Activated T-helper 2 cell treated with anti-CD3 and anti-CD28 coated beads, Interferon-gamma antibody, Interleukin-2, Interleukin-4, amounts not matched to agents 10 μg/mL and 5 μg/mL and 100 μg/mL, durations not matched to agents 14 hours and 24 hours and 36 hours (primary cell): ENCODE measurements at regions of chr20 and their contacts with region 1.

Region 1: DNA sequence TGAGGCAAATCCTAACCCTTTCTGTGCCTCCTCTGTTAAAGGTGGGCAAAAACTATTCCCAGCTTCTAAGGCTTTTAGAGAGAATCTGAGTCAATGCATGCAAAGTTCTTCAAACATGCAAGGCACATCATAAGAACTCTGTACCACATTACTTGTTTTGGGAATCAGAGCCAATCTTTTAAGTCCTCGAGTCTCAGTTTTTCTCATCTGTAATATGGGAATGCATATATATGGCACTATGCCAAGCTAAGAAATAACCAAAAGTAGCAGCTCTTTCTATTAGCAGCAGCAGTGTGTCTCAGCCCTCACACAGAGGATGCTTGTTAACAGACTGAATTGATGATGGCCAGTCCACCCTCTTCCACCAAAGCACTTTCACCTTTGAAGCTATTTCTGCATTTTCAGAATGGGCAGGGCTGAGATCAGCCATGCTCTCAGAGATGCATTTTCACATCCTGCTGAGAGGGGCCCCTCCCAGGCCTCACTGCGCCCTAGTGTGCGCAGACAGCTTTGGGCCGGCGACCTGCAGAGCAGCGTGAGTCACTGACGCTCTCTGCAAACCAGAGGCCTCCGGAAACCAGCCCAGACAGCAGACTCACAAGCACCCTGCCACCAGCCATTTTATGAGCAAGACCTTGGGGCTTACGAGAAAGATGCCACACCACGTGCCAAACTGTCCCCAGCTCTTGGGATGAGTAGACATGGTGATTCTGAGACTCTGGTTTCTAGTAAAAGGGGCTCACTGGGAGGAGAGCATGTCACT is 138.0 kb downstream of the NFATC2 start:
- DNase-seq: peak; percentile 84
- H3K4me3 Mint-ChIP-seq: peak overlapping the region; percentile 28
- H3K27ac Mint-ChIP-seq: peak overlapping the region; percentile 95
- H3K4me1 Mint-ChIP-seq: peaks cover 88% of the 10 kb centered on the region
- H3K27me3 Mint-ChIP-seq: no peaks in the 10 kb centered on the region

Region 2: GRCh38 chr20:50824193-50824632 is 580.3 kb before region 1 on chr20:
- intact Hi-C with region 1: no loop called
- DNase-seq: no peak
- H3K4me3 Mint-ChIP-seq: no peak overlapping the region
- H3K27ac Mint-ChIP-seq: no peak overlapping the region
- H3K4me1 Mint-ChIP-seq: peaks cover 4% of the 10 kb centered on the region
- H3K27me3 Mint-ChIP-seq: no peaks in the 10 kb centered on the region

Region 3: GRCh38 chr20:51385646-51386530 is 18.6 kb before region 1 on chr20:
- intact Hi-C with region 1: loop called (anchors 1 kb)
- DNase-seq: no peak
- H3K4me3 Mint-ChIP-seq: no peak overlapping the region
- H3K27ac Mint-ChIP-seq: no peak overlapping the region
- H3K4me1 Mint-ChIP-seq: peaks cover 62% of the 10 kb centered on the region
- H3K27me3 Mint-ChIP-seq: no peaks in the 10 kb centered on the region

Region 4: GRCh38 chr20:51423290-51423667 is 18.8 kb after region 1 on chr20:
- intact Hi-C with region 1: loop called (anchors 2 kb)
- DNase-seq: no peak
- H3K4me3 Mint-ChIP-seq: no peak overlapping the region
- H3K27ac Mint-ChIP-seq: peak overlapping the region; percentile 85
- H3K4me1 Mint-ChIP-seq: peaks cover 50% of the 10 kb centered on the region
- H3K27me3 Mint-ChIP-seq: no peaks in the 10 kb centered on the region

Region 5: DNA sequence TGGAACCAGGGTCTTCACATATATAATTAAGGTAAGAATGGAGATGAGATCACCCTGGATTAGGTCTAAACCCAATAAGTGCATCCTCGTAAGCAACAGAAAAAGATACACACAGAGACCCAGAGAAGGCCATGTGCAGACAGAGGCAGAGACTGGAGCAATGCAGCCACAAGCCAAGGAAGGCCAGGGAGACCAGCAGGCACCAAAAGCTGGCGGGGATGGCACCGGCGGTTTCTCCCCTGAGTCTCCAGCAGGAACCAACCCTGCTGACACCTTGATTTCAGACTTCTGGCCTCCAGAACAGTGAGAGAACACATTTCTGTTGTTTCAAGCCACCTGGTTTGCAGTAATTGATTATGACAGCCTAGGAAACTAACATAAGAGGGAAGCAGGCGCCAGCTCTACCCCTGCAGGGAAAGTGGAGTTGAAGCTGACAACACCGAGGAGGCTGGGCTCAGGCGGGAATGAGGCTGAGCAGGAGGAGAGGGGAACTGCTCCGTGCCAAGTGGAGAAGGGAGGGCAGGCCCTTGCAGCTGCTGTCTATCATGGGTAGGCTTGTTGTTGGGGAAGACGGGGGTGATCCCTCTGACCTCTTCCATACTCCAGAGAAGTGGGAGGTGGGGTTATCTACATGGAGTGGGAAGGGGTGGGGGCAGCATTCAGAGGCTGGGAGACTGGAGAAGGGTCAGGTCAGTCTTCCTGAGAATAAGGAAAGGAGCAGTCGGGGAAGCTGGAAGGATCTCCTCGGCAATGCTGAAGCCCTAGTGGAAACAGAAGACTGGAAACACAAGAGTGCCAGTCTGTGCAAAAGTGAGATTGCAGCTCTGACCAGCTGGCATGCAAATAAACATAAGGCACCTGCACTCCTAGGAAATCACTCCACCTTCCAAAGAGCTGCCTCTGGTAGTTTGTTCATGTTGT is 65.4 kb after region 1 on chr20:
- intact Hi-C with region 1: loop called (anchors 2 kb)
- DNase-seq: no peak
- H3K4me3 Mint-ChIP-seq: peak overlapping the region; percentile 18
- H3K27ac Mint-ChIP-seq: peak overlapping the region; percentile 77
- H3K4me1 Mint-ChIP-seq: peaks cover 43% of the 10 kb centered on the region
- H3K27me3 Mint-ChIP-seq: no peaks in the 10 kb centered on the region

Region 6: DNA sequence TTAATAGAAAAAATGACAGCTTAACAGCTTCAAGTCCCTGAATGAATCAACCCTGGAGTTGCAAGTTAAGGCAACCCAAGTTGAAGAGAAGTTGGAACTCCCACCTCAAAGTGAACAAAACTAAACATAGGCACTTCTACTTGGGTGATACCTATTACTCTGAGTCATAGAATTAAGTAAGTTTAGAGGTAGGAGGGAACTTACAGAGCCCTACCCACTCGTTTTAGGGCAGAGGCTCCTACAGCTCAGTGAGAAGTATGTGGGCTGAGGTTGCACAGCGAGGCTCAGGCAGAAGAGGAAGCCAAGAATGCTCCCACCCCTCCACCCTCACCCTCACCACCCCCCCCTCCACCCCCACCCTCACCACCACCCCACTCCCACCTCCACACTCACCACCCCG is 95.8 kb after region 1 on chr20:
- intact Hi-C with region 1: loop called (anchors 1 kb)
- DNase-seq: peak; percentile 46
- H3K4me3 Mint-ChIP-seq: no peak overlapping the region
- H3K27ac Mint-ChIP-seq: peak overlapping the region; percentile 79
- H3K4me1 Mint-ChIP-seq: peaks cover 74% of the 10 kb centered on the region
- H3K27me3 Mint-ChIP-seq: no peaks in the 10 kb centered on the region

Region 7: DNA sequence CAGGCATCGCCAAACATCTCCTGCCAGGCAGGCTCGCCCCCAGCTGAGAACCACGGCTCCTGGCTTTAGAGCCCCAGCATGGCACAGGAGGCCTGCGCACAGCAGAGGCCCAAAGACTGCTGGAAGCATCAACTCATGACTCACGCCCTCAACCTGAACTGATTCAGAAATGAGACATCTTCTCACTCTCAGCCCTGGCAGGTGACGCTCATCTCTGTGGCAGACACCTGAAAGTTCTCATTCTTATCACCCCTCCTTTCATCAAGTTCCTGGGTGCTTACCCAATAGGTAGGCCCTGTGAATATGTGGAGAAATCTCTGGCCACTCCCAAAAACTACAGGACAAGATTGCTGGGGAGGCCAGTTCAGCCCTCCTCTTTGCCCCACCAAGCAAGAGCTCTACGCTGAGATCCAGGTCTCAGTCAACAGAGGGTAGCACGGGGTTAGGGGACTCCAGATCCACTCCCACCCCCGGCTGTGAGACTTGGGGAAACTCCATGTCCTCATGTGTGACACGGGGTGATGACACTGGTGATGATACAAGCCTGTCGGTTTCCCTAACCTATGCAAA is 126.7 kb after region 1 on chr20:
- intact Hi-C with region 1: loop called (anchors 1 kb)
- DNase-seq: peak; percentile 44
- H3K4me3 Mint-ChIP-seq: peak overlapping the region; percentile 82
- H3K27ac Mint-ChIP-seq: peak overlapping the region; percentile 99
- H3K4me1 Mint-ChIP-seq: peaks cover 84% of the 10 kb centered on the region
- H3K27me3 Mint-ChIP-seq: no peaks in the 10 kb centered on the region

Region 8: DNA sequence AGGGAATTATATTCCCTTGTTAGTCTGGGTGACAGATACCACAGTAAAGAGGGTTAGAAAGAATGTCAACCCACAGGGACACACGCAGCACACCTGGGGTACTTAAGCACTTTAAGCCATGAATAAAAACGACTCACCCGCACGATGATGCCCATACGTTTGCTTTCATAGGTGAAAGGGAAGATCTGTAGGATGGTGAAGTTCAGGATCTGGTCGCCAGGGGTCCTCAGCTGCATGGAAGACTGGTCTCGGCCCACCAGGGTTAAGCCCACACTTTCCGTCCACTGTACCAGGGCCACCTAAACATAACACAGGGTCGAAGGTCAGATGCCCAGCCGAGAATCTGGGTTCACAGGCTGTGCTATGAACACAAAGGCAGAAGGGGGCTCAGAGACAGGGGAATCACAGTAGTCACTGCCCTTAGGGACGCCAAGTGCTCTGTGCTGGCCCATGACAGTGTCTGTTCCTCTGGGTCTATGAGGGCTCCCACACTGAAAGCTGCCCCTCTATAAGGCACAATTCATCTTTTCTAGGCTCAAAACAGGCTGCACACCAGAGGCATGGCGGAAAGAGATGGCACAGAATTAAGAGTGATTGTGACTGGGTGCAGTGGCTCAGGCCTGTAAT is 234.8 kb after region 1 on chr20:
- intact Hi-C with region 1: no loop called
- DNase-seq: peak; percentile 28
- H3K4me3 Mint-ChIP-seq: no peak overlapping the region
- H3K27ac Mint-ChIP-seq: no peak overlapping the region
- H3K4me1 Mint-ChIP-seq: peaks cover 13% of the 10 kb centered on the region
- H3K27me3 Mint-ChIP-seq: peaks cover 2% of the 10 kb centered on the region